ENCODE measurements at regions of chr1 and their contacts with region 1.

Region 1: DNA sequence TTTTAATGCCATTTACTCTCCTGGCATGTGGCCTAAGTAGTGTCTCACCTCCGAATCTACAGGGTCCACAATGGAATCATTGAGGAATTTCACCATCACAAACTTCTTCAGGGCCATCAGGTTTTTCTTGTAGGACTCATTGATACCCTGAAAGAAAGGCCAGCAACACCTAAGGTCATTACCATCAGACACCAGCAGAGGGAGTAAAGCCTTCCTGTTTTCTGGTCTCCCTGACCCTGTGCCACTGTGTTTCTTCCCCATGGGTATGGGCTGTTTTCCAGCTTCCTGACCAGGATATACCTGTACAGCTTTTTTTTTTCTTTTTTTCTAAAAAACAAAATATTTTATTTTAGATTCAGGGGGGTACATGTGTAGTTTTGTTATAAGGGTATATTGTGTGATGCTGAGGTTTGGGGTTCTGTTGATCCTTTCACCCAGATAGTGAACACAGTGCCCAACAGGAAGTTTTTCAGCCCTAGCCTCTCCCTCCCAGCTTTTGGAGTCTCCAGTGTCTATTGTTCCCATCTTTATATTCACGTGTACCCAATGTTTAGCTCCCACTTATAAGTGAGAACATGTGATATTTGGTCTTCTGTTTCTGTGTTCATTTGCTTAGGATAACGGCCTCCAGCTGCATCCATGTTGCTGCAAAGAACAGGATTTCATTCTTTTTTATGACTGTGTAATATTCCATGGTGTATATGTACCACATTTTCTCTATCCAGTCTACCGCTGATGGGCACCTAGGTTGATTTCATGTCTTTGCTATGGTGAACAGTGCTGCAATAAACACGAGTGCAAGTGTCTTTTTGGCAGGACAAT is 18.3 kb downstream of the PPT1 start:
- DNase-seq: peak; percentile 75
- H3K4me3 Mint-ChIP-seq: no peak overlapping the region
- H3K27ac Mint-ChIP-seq: no peak overlapping the region
- H3K4me1 Mint-ChIP-seq: peaks cover 7% of the 10 kb centered on the region
- H3K27me3 Mint-ChIP-seq: no peaks in the 10 kb centered on the region

Region 2: GRCh38 chr1:39901698-39902459 is 176.8 kb before region 1 on chr1 and contains the start of gene MYCL:
- CTCF ChIA-PET with region 1: no interaction called
- intact Hi-C with region 1: no loop called
- DNase-seq: peak; percentile 73
- H3K4me3 Mint-ChIP-seq: peak within 1 kb of the TSS; percentile 65
- H3K27ac Mint-ChIP-seq: no peak within 1 kb of the TSS
- H3K4me1 Mint-ChIP-seq: peaks cover 8% of the 10 kb centered on the region
- H3K27me3 Mint-ChIP-seq: peaks cover 46% of the 10 kb centered on the region
- total RNA-seq, gene MYCL: 0.19 TPM in 1 of 2 experiments, not detected in the other

Region 3: GRCh38 chr1:40090652-40091355 is 12.1 kb after region 1 on chr1:
- CTCF ChIA-PET with region 1: interaction called, 14 read pairs
- intact Hi-C with region 1: no loop called
- DNase-seq: no peak
- H3K4me3 Mint-ChIP-seq: no peak overlapping the region
- H3K27ac Mint-ChIP-seq: no peak overlapping the region
- H3K4me1 Mint-ChIP-seq: peaks cover 25% of the 10 kb centered on the region
- H3K27me3 Mint-ChIP-seq: no peaks in the 10 kb centered on the region

Region 4: DNA sequence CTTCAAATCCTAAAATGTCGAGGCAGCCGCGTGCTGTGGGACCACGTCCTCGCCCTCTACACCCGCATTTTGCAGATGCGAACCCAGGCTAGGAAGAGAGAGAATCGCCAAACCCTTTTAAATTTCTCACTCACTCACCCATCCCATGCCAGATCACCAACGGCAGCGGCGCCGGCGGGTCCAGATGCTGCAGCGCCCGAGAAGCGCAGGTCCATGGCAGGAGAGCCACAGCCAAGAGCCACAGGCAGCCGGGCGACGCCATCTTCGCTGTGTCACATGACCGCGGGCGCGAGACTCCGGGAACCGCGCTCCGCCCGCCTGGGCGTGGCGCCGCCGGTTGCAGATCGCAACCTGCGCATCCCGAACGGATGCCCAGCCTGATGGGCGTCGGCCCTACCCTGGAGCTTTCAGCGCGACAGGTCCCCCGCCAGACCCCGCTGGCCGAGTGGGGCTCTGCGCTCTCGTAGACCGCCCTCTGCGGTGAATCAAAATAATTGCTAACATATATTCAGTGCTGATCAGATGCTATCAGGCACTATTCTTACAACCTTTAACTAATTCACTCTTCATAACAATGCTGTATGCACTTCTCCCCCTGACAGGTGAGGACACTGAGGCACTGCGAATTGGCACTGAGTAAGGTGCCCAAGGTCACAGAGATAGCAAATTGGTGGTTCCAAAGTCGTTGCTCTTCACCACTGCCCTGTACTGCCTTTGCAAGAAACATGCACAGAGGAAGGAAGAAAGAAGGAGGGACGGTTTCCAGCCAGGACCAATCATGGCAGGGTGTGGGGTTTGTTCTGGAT is 18.5 kb after region 1 on chr1 and contains the start of gene PPT1:
- CTCF ChIA-PET with region 1: interaction called, 12 read pairs
- intact Hi-C with region 1: no loop called
- DNase-seq: peak; percentile 82
- H3K4me3 Mint-ChIP-seq: peak within 1 kb of the TSS; percentile 94
- H3K27ac Mint-ChIP-seq: peak within 1 kb of the TSS; percentile 65
- H3K4me1 Mint-ChIP-seq: peaks cover 41% of the 10 kb centered on the region
- H3K27me3 Mint-ChIP-seq: no peaks in the 10 kb centered on the region
- total RNA-seq, gene PPT1: 81.3 to 89.7 TPM

Measured in activated naive CD4-positive, alpha-beta T cell treated with anti-CD3 and anti-CD28 coated beads for 36 hours (primary cell).